Posterior vena cava (tissue), 2 donors: ENCODE measurements at regions of chr15 and their contacts with region 1.

Region 1: DNA sequence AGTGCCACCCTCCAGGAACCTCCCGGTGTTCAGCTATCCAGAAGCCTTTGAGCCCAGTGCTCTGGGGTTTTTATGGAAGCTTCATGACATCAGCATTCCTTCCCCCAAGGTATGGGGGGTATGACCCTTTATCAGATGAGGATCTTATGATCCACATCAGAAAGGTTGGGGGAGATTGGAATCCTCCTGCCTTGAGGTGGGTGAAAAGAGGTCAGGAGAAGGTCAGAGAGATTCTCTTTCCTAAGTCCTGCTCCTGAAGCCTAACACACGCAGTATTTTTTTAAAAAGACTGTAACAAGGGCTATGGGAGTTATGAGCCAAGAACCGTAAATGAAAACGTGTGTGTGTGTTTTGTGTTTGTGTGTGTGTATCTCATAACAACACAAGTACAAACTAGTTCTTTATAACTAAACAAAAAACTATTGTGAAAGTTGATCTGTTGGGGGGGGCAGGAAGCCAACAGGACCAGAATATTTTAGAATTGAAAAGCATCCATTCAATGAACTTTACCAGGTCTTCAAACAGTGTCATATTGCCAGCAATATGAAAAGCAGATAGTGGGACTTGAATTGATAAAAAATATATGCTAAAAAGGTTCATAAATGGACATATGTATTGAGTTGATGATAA is 13.2 kb downstream of the MKRN3 start:
- DNase-seq: no peak

Region 2: DNA sequence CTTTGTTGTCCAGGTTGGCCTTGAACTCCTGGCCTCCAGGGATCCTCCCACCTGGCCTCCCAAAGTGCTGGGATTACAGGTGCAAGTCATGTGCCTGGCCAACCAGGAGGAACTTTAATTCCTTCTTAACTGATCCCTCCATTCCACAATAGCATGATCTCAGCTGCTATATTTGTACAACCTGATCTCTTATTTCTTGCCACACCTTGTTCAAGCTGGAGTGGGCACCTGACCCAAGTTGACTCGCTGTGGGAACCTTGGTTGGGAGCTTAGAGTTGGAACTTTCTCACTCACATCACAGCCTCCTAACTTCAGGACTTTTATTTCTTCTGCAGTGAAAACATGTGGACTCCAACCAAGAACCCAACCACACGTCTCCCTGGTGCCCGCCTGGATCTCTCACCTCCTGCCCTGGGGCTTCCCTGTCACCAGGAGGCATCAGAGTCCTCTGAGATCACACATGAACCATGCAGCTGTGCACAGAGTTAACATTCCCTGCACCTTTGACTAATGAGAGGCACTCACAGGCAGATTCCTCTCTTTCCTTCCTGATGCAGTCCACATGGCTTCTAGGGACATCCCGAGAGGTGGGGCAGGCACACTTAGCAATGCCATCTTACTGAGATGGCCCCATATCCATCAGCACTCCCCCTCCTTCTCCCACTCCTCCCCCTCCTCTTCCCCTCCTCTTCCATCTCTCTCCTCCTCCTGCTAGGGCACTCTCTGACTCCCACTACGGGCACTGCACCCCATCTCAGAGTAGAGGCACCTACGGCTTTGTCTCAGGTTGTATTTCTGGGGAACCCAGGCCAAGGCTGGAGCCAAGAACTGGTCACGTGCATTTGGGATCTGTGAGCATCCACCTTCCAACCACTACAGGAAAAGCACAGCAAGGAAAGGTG is 588.8 kb before region 1 on chr15:
- intact Hi-C with region 1: no loop called
- DNase-seq: no peak

Region 3: DNA sequence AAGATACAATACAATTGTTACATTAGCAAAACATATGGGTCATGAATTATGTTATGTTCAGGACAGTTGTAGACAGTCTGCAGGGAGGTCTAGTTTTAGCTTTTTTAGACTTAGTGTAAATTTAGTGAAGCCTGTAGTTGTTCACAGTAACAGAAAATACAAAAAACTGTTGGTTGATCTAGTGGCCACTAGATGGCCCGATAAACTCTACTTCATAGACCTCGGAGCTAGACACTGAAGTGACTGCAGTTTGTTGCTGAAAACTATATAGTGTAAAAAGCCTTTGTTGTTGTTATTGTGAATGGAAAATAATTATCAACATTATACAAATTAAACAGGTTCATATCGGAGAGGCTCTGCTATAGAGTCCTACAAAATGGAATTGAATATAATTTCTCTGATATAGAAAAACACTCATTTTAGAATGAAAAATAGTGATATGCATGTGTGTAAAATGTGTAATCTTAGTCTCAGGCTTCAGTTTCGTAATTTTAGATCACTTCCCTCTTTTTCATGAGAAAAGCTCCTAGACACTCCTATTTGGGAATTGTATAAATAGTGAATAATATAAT is 50.7 kb after region 1 on chr15:
- intact Hi-C with region 1: loop called in 1 of 2 experiments (anchors 2 kb)
- DNase-seq: no peak